Breast epithelium (tissue), 4 donors: ENCODE measurements at regions of chr7 and their contacts with region 1.

Region 1: DNA sequence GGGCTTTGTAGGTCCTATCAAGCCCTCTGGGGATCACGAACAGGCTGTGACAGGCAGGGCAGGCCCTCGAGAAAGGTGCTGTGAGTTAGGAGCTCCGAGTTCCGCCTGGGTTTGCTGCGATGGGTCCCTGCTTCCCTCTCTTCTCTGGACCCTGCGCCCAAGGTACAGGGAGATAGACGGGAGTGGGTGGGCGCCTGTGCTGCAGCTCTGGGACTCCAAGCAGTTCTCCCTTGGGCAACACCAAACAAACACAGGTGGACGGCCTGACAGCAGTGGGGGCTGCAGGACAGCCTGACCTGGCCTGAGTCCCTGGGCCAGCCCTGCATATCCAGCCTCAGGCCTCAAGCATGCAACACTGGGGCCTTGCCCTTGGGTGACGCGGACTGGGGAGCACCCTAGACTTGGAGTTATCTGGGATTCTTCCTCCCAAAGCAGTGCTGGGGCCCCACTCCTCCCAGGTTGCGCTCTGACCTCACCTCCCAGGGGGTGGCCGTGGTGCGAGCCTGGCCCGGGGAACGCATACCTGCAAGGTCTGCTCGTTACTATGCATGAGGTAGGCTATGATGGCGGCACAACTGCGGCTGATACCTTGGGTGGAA is 6.1 kb upstream of the TMEM120A start:
- DNase-seq: no peak
- H3K4me3 ChIP-seq: no peak overlapping the region
- H3K27ac ChIP-seq: no peak overlapping the region
- H3K4me1 ChIP-seq: no peaks in the 10 kb centered on the region
- H3K27me3 ChIP-seq: no peaks in the 10 kb centered on the region
- CTCF ChIP-seq: no peak
- POLR2A ChIP-seq: no peak

Region 2: GRCh38 chr7:75054744-75055143 is 945.7 kb before region 1 on chr7:
- intact Hi-C with region 1: loop called (anchors 5 kb)
- DNase-seq: peak in 1 of 2 donors; percentile 27
- H3K4me3 ChIP-seq: peak overlapping the region in 1 of 3 donors; percentile 15
- H3K27ac ChIP-seq: peak overlapping the region; percentile 67 to 90
- H3K4me1 ChIP-seq: peaks cover 0 to 4% of the 10 kb centered on the region in 2 donors
- H3K27me3 ChIP-seq: no peaks in the 10 kb centered on the region
- CTCF ChIP-seq: no peak
- POLR2A ChIP-seq: no peak

Region 3: DNA sequence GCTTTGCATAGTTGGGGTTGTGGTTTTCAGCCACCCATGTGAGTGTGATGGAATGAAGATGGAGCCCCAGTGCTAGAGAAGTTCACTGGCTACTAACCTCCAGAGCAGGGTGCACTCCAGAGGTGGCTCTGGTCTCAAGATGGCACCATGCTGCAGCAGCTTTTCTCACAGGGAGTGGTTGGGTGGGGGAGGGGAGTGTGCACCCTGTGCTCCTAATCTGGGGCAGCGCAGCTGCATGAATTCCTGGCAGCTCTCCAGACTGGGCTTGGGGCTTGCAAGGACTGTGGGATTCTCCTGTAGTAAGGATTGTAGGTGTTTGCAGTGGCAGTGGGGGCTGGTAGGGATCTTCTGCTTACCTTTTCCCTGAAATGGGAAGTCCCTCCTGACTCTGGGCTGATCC is 1821.8 kb after region 1 on chr7:
- intact Hi-C with region 1: no loop called
- DNase-seq: no peak
- H3K4me3 ChIP-seq: no peak overlapping the region
- H3K27ac ChIP-seq: no peak overlapping the region
- H3K4me1 ChIP-seq: no peaks in the 10 kb centered on the region
- H3K27me3 ChIP-seq: no peaks in the 10 kb centered on the region
- CTCF ChIP-seq: no peak
- POLR2A ChIP-seq: no peak